ENCODE measurements at regions of chr7 and their contacts with region 1.

Region 1: DNA sequence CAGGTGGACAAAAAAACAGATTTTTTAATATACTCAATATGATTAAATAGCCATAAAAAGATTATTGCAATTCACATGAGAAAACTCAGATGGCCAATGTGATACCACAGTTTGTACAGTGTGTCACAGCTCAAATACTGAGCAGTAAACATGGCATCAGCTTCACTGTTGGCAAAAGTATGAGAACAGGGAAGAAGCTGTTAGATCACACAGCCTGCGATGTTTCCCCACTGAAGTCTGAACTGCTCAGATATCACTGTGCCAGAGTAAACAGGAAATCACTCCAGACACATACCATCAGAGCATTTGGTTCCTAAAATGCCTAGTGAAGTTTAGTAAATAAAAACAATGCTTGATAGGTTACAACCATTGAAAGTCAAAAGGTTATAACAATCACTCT is 347.8 kb downstream of the ETV1 start:
- DNase-seq: peak; percentile 85
- ATAC-seq: peak; percentile 100
- H3K4me3 ChIP-seq: no peak overlapping the region
- H3K27ac ChIP-seq: peak overlapping the region; percentile 77
- H3K4me1 ChIP-seq: peaks cover 20% of the 10 kb centered on the region
- H3K27me3 ChIP-seq: no peaks in the 10 kb centered on the region
- CTCF ChIP-seq: no peak

Region 2: DNA sequence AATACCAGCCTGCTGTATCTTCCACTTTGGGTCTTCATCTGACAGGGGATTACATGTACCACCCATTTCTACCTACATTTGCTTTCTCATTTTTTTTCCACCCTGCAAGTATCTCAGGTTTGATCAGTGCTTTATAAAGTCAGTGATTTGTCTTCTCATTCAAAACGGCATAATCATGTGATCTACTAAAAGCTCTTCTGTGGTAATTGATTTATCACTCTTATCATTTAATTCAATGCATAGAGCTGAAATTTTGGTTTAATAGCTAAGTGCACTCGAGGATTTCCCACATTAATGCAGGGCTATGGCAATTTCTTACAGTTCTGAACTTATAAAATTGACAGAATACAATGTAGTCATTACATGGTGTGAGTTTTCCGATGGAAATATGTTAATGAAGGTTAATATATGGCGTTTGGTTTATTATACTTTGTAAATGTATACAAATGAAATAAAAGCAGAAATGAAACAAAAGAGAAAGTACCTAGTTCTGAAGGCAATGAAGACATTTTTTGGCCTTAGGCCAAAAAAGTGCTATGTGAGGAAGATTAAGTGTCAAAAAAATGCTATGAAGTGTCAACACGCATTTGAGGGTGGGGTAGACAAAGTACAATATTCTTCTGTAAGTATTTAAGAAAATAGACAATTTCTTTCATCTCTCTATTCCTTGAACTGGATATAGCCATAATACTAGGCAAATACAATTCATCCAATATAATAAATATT is 109.5 kb before region 1 on chr7:
- CTCF ChIA-PET with region 1: no interaction called
- POLR2A ChIA-PET with region 1: no interaction called
- intact Hi-C with region 1: loop called (anchors 5 kb)
- DNase-seq: no peak
- ATAC-seq: no peak
- H3K4me3 ChIP-seq: no peak overlapping the region
- H3K27ac ChIP-seq: no peak overlapping the region
- H3K4me1 ChIP-seq: no peaks in the 10 kb centered on the region
- H3K27me3 ChIP-seq: no peaks in the 10 kb centered on the region
- CTCF ChIP-seq: no peak

Region 3: GRCh38 chr7:13628239-13629001 is 13.3 kb before region 1 on chr7:
- CTCF ChIA-PET with region 1: no interaction called
- POLR2A ChIA-PET with region 1: no interaction called
- intact Hi-C with region 1: loop called (anchors 1 kb)
- DNase-seq: peak; percentile 65
- ATAC-seq: peak; percentile 70
- H3K4me3 ChIP-seq: no peak overlapping the region
- H3K27ac ChIP-seq: peak overlapping the region; percentile 90
- H3K4me1 ChIP-seq: peaks cover 24% of the 10 kb centered on the region
- H3K27me3 ChIP-seq: no peaks in the 10 kb centered on the region
- CTCF ChIP-seq: no peak